Activated CD4-positive, alpha-beta T cell treated with anti-CD3 and anti-CD28 coated beads for 36 hours (primary cell): ENCODE measurements at regions of chr2 and their contacts with region 1.

Region 1: DNA sequence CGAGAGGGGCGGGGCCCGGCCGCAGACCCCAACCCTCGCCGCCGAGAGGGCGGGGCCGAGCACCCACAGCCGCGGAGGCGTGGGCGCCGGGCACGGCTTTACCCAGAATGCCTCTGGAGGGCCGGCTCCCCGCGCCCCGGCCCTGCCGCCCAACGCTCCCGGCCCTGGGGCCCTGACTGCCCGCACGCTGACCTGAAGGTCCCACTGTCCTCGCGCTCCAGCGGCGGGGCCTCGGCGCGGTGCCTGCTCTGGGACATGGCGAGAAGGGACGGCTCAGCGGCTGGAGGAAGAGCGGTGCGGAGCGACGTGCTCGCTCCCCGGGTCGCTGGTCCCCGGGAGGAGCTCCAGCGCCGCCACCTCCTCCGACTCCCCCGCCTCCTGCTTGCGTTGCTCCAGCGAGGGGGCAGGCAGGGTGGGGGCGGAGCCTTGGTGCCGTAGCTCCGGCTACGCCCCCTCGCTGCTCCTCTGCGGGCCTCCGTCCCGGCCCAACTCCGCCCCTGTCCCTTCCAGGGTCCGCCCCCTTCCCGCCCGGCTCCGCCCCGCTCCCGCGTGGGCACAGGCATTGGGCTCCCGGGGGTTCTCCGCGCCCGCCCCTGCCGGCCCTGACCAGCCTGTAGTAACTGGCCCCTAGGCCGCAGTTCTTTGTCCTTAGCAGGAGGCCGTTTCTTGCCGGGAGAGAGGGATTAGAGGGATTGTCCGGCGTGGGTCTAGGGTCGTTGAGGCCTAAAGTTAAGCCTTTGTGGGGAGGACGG is at the starts of genes PJVK and PRKRA:
- DNase-seq: peak; percentile 98
- ATAC-seq: peak; percentile 90
- H3K4me3 Mint-ChIP-seq: peak within 1 kb of the TSS; percentile 88
- H3K27ac Mint-ChIP-seq: peak within 1 kb of the TSS; percentile 96
- H3K4me1 Mint-ChIP-seq: peaks cover 27% of the 10 kb centered on the region
- H3K27me3 Mint-ChIP-seq: no peaks in the 10 kb centered on the region
- total RNA-seq, gene PJVK: 1.9 to 2.4 TPM
- total RNA-seq, gene PRKRA: 63.5 to 65.1 TPM

Region 2: DNA sequence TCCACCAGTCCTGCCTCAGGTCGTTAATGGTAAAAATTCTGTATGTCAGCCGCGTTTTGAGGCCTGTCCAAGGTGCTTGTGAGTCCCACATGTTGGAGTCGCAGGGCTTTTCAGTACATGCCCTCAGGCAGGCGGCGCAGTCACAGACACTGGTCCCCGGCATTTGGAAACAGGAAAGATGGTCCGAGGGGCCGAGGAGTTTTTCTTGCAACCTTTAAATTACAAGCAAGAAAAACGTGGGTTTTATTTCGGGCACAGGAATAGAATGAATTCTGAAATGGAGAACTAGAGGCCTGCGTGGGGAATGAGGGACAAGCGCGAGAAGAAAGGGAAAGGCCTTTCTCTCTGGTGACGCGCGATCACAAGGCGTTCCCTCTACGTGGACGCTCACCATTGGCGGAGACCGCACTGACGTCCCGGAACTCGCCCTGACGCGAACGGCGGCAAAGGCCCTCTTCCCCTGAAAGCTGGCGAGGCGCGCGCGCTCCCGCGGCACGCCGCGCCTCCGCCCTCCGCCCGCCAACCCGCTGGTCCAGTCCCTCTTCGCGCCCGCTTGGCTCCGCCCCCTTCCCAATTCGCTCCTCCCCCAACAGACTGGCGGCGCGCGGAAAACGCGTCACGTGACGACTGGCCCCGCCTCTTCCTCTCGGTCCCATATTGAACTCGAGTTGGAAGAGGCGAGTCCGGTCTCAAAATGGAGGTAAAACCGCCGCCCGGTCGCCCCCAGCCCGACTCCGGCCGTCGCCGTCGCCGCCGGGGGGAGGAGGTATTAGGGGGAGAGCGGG is 1238.7 kb before region 1 on chr2 and contains the start of gene HNRNPA3:
- CTCF ChIA-PET with region 1: no interaction called
- POLR2A ChIA-PET with region 1: no interaction called
- intact Hi-C with region 1: loop called in 1 of 2 experiments (anchors 2 kb)
- DNase-seq: peak; percentile 100
- ATAC-seq: peak; percentile 90
- H3K4me3 Mint-ChIP-seq: peak within 1 kb of the TSS; percentile 86
- H3K27ac Mint-ChIP-seq: peak within 1 kb of the TSS; percentile 99
- H3K4me1 Mint-ChIP-seq: peaks cover 42% of the 10 kb centered on the region
- H3K27me3 Mint-ChIP-seq: no peaks in the 10 kb centered on the region
- total RNA-seq, gene HNRNPA3: 200 to 290 TPM

Region 3: DNA sequence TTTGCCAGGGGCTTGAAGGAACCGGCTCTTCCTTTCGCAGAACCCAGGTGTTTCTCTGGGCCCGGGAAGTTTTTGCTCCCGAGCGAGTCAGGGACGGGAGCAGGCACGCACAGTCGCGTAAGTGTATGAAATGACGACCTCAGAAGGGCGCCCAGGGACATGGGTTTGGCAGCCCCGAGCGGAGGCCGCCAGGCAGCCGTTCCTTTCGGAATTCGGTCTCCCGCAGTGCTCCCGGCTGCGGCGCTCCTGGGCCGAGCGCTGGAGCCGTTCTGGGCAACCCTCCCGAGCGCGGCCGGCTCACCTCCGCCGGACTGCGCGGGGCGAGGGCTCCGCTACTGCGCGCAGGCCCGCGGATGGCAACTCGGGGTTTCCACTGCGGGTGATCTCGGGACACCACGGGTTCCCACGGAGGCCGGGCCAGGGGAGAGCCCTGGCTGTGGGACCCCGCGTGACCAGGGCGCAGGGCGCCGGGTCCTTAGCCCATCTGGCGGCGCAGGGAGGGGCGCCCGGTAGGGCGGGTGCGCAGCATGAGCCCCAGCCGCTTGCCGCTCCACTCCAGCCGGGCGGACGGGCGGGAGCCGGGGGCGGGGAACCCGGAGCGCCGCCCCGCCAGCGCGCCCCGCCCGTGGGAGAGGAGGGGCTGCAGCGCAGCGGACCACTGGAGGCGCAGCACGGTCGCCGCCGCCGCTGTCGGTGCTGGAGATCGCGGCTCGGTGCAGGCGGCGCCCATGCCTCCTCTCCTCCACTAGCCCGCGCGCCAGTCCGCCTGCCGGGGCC is 256.9 kb before region 1 on chr2 and contains the start of gene OSBPL6:
- CTCF ChIA-PET with region 1: no interaction called
- POLR2A ChIA-PET with region 1: no interaction called
- intact Hi-C with region 1: loop called in 1 of 2 experiments (anchors 1 kb)
- DNase-seq: peak; percentile 82
- ATAC-seq: peak; percentile 91
- H3K4me3 Mint-ChIP-seq: peak within 1 kb of the TSS; percentile 67
- H3K27ac Mint-ChIP-seq: no peak within 1 kb of the TSS
- H3K4me1 Mint-ChIP-seq: peaks cover 7% of the 10 kb centered on the region
- H3K27me3 Mint-ChIP-seq: peaks cover 45% of the 10 kb centered on the region
- total RNA-seq, gene OSBPL6: 2.5 to 3.3 TPM

Region 4: DNA sequence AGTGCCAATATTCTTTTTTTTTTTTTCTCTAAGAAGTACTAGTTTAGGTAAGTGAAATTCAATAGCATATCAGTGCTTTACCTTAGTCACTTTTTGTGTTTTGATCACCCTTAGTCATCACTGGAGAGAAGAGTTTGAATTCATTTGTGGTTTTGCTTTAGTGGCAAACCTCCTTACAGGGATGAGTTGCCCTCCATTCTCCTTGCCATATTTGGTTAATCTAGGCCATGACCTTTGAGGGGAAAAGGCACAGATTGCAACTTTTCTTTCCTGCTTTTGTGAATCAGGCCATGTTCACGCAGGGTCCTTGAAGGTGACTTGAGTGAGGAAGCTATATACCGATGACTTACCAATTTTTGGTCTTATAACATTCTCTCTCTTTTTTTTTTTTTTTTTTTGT is 63.7 kb after region 1 on chr2:
- CTCF ChIA-PET with region 1: no interaction called
- POLR2A ChIA-PET with region 1: interaction called, 3 read pairs
- intact Hi-C with region 1: loop called in 1 of 2 experiments (anchors 2 kb)
- DNase-seq: peak; percentile 70
- ATAC-seq: peak; percentile 95
- H3K4me3 Mint-ChIP-seq: peak overlapping the region; percentile 24
- H3K27ac Mint-ChIP-seq: peak overlapping the region; percentile 78
- H3K4me1 Mint-ChIP-seq: peaks cover 28% of the 10 kb centered on the region
- H3K27me3 Mint-ChIP-seq: no peaks in the 10 kb centered on the region

Region 5: DNA sequence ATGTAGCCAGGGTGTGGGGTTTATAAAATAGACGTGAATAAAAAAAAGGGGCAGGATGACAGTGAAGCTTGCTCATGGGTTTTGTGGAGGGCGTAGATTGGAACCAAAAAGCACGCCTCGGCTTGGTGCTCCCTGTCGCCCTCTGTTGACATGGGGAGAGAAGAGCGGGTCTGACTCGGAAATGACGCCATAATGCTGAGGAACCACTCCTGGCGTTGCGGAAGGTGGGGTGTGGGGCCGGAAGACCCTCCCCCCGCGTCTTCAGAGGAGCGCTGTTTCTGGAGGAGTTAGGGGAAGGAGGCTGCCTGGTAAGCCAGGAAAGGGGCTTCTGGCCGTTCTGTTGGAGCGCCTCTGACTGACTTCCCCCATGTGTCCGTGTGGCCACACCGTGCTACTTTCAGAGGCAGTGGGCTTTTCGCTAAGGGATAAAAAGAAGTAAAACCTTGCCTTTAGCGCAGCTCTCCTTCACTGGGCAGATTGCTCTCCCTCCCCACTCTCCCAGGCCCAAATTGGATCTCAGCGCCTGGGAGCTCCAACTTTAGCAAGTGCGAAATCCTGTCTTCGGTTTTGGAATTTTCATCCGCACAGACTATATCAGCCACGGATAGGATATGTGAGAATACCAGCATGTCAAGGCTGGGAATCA is 72.1 kb after region 1 on chr2:
- CTCF ChIA-PET with region 1: interaction called, 7 read pairs
- POLR2A ChIA-PET with region 1: no interaction called
- intact Hi-C with region 1: loop called (anchors 1 kb)
- DNase-seq: peak; percentile 90
- ATAC-seq: peak; percentile 80
- H3K4me3 Mint-ChIP-seq: peak overlapping the region; percentile 85
- H3K27ac Mint-ChIP-seq: peak overlapping the region; percentile 92
- H3K4me1 Mint-ChIP-seq: peaks cover 55% of the 10 kb centered on the region
- H3K27me3 Mint-ChIP-seq: no peaks in the 10 kb centered on the region